K562 (cell line): ENCODE measurements at regions of chr3 and their contacts with region 1.

Region 1: GRCh38 chr3:108589146-108589997 is at the starts of genes CIP2A and DZIP3:
- DNase-seq: peak; percentile 84 to 92 (median 86)
- ATAC-seq: peak; percentile 92
- H3K4me3 ChIP-seq: peak within 1 kb of the TSS; percentile 76
- H3K27ac ChIP-seq: peak within 1 kb of the TSS; percentile 90
- H3K4me1 ChIP-seq: peaks cover 0 to 8% of the 10 kb centered on the region in 2 experiments; a peak in 2 of 5 replicates
- H3K27me3 ChIP-seq: no peaks in the 10 kb centered on the region
- CTCF ChIP-seq: no peak
- EP300 ChIP-seq: no peak
- POLR2A ChIP-seq: peak; percentile 85
- RAD21 ChIP-seq: no peak
- polyA plus RNA-seq, gene CIP2A: 10.5 to 17.9 TPM
- polyA plus RNA-seq, gene DZIP3: 4.4 to 5.2 TPM

Region 2: GRCh38 chr3:108345492-108346205 is 243.7 kb before region 1 on chr3:
- CTCF ChIA-PET with region 1: no interaction called
- POLR2A ChIA-PET with region 1: no interaction called
- in situ Hi-C with region 1: no loop called
- intact Hi-C with region 1: no loop called
- DNase-seq: no peak
- ATAC-seq: no peak
- H3K4me3 ChIP-seq: no peak overlapping the region
- H3K27ac ChIP-seq: no peak overlapping the region
- H3K4me1 ChIP-seq: no peaks in the 10 kb centered on the region
- H3K27me3 ChIP-seq: no peaks in the 10 kb centered on the region
- CTCF ChIP-seq: no peak
- EP300 ChIP-seq: no peak
- POLR2A ChIP-seq: no peak
- RAD21 ChIP-seq: no peak

Region 3: DNA sequence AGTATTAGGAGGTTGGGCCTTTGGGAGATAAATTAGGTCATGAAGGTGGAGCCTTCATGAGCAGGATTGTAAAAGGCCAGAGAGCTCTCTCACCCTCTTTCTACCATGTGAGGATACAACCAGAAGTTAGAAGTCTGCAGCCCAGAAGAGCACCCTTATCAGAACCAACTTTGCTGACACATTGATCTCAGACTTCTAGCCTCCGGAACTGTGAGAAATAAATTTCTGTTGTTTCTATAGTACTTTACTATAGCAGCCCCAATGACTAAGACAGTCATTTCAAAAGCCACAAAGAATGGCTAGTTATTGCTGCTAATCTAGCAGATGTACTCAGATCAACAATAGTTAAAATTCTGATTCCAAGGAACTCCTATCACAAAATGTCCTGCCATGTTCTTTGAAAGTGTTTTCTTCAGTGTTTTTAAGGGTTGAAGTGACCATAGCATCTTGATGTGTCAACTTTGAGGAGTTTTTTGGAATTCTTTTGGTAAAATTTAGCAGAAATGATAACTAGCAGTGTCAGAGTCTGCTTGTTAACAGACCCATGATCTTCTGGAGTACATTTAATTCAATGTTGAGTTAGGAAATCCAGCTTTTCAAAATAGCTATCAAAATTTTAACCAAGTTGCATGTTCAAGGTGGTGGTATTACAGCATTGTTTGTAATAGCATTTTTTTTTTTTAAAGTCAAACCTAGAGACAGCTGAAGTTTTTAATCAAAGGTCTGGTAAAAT is 10.5 kb after region 1 on chr3:
- CTCF ChIA-PET with region 1: interaction called, 3 read pairs
- POLR2A ChIA-PET with region 1: interaction called, 18 read pairs
- in situ Hi-C with region 1: no loop called
- intact Hi-C with region 1: no loop called
- DNase-seq: peak in 2 of 4 experiments; percentile 24 to 69
- ATAC-seq: peak; percentile 83
- H3K4me3 ChIP-seq: no peak overlapping the region
- H3K27ac ChIP-seq: peak overlapping the region; percentile 90
- H3K4me1 ChIP-seq: peaks cover 0 to 11% of the 10 kb centered on the region in 2 experiments; a peak in 2 of 5 replicates
- H3K27me3 ChIP-seq: no peaks in the 10 kb centered on the region
- CTCF ChIP-seq: no peak
- EP300 ChIP-seq: no peak
- POLR2A ChIP-seq: no peak; the same call in 1 of the 2 replicates
- RAD21 ChIP-seq: no peak